Panc1 (cell line): ENCODE measurements at regions of chr3 and their contacts with region 1.

Region 1: GRCh38 chr3:16177962-16178627 is 3.6 kb downstream of the GALNT15 start:
- DNase-seq: peak; percentile 45
- ATAC-seq: peak; percentile 89
- H3K4me3 ChIP-seq: peak overlapping the region in 1 of 2 experiments; percentile 14; a peak in 1 of 4 replicates
- H3K27ac ChIP-seq: no peak overlapping the region; the same call in 1 of the 2 replicates
- H3K4me1 ChIP-seq: peaks cover 12% of the 10 kb centered on the region
- H3K27me3 ChIP-seq: no peaks in the 10 kb centered on the region
- CTCF ChIP-seq: peak; percentile 93

Region 2: DNA sequence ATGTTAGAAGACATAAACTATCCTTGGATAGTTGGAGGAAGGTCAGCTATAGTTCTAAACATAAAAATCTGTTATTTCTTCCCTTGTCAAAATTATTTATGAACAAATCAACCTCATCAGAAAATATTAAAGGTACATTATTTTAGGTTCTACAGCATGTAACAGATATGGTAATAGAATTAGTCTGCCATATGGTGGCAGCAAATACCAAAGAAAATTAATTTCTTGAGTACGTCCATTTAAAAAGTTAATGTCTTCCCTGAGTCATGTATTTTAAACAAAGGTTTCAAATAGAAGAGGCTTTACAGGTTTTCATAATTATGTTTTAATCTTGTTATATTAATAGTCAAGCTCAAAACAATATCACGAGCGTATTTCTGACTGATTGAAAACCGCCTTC is 362.4 kb before region 1 on chr3:
- CTCF ChIA-PET with region 1: no interaction called
- POLR2A ChIA-PET with region 1: no interaction called
- in situ Hi-C with region 1: no loop called
- intact Hi-C with region 1: loop called (anchors 10 kb)
- DNase-seq: no peak
- ATAC-seq: peak; percentile 56; the same call in 1 of the 2 replicates
- H3K4me3 ChIP-seq: no peak overlapping the region
- H3K27ac ChIP-seq: peak overlapping the region; percentile 71; the same call in 1 of the 2 replicates
- H3K4me1 ChIP-seq: peaks cover 37% of the 10 kb centered on the region; the same call in 1 of the 2 replicates
- H3K27me3 ChIP-seq: no peaks in the 10 kb centered on the region
- CTCF ChIP-seq: peak; percentile 32; the same call in 1 of the 2 replicates

Region 3: GRCh38 chr3:16048435-16049318 is 129.4 kb before region 1 on chr3:
- CTCF ChIA-PET with region 1: interaction called, 4 read pairs
- POLR2A ChIA-PET with region 1: no interaction called
- in situ Hi-C with region 1: no loop called
- intact Hi-C with region 1: loop called (anchors 1 kb)
- DNase-seq: no peak
- ATAC-seq: peak; percentile 99
- H3K4me3 ChIP-seq: no peak overlapping the region
- H3K27ac ChIP-seq: peak overlapping the region; percentile 66
- H3K4me1 ChIP-seq: peaks cover 6% of the 10 kb centered on the region
- H3K27me3 ChIP-seq: no peaks in the 10 kb centered on the region
- CTCF ChIP-seq: peak; percentile 79

Region 4: GRCh38 chr3:16467393-16467792 is 289.3 kb after region 1 on chr3:
- CTCF ChIA-PET with region 1: no interaction called
- POLR2A ChIA-PET with region 1: no interaction called
- in situ Hi-C with region 1: no loop called
- intact Hi-C with region 1: no loop called
- DNase-seq: no peak
- ATAC-seq: no peak
- H3K4me3 ChIP-seq: no peak overlapping the region
- H3K27ac ChIP-seq: no peak overlapping the region
- H3K4me1 ChIP-seq: no peaks in the 10 kb centered on the region
- H3K27me3 ChIP-seq: no peaks in the 10 kb centered on the region
- CTCF ChIP-seq: no peak

Region 5: GRCh38 chr3:16496408-16497222 is 318.5 kb after region 1 on chr3:
- CTCF ChIA-PET with region 1: no interaction called
- POLR2A ChIA-PET with region 1: no interaction called
- in situ Hi-C with region 1: no loop called
- intact Hi-C with region 1: no loop called
- DNase-seq: no peak
- ATAC-seq: no peak
- H3K4me3 ChIP-seq: no peak overlapping the region
- H3K27ac ChIP-seq: no peak overlapping the region
- H3K4me1 ChIP-seq: no peaks in the 10 kb centered on the region
- H3K27me3 ChIP-seq: no peaks in the 10 kb centered on the region
- CTCF ChIP-seq: no peak

Region 6: DNA sequence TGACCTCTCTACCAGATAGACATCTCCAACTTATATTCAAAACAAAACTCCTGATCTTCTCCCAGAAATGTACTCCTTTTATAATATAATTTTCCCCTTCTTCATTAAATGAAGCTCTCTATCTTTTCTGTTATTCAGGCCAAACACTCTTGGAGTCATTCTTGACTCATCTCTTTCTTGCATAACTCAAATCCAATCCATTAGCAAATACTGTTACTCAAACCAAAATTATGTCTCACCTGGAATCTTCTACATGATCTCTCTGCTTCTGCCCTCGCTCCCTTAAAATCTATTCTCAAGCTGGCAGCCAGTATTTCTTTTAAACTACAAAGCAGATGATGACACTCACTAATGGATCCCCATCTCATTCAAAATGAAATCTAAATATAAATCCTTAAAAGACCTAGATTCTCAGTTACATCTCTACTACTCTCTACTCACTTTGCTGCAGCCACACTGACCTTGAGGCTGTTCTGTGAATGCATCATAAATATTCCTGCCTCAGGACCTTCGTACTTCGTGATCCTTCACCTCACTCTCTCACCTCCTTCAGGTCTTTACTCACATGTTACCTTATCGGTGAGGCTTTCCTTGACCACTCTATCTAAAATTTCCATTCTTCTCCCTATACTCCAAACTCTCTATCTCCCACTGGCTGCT is 1403.5 kb after region 1 on chr3:
- CTCF ChIA-PET with region 1: no interaction called
- POLR2A ChIA-PET with region 1: no interaction called
- in situ Hi-C with region 1: no loop called
- intact Hi-C with region 1: no loop called
- DNase-seq: no peak
- ATAC-seq: no peak
- H3K4me3 ChIP-seq: no peak overlapping the region
- H3K27ac ChIP-seq: no peak overlapping the region
- H3K4me1 ChIP-seq: no peaks in the 10 kb centered on the region
- H3K27me3 ChIP-seq: no peaks in the 10 kb centered on the region
- CTCF ChIP-seq: no peak